CD8-positive, alpha-beta memory T cell (primary cell): ENCODE measurements at regions of chr15 and their contacts with region 1.

Region 1: GRCh38 chr15:60179786-60180391 is 175.8 kb downstream of the FOXB1 start:
- DNase-seq: peak in 3 of 5 donors; percentile 6 to 48 (median 28)
- H3K4me3 ChIP-seq: no peak overlapping the region
- H3K4me3 Mint-ChIP-seq: no peak overlapping the region
- H3K27ac ChIP-seq: no peak overlapping the region
- H3K27ac Mint-ChIP-seq: no peak overlapping the region
- H3K4me1 ChIP-seq: no peaks in the 10 kb centered on the region
- H3K4me1 Mint-ChIP-seq: no peaks in the 10 kb centered on the region
- H3K27me3 ChIP-seq: no peaks in the 10 kb centered on the region
- H3K27me3 Mint-ChIP-seq: peaks cover 13 to 44% of the 10 kb centered on the region in 2 donors

Region 2: GRCh38 chr15:59725172-59725486 is 454.8 kb before region 1 on chr15:
- CTCF ChIA-PET with region 1: interaction called, 13 read pairs
- POLR2A ChIA-PET with region 1: no interaction called
- DNase-seq: no peak
- H3K4me3 ChIP-seq: no peak overlapping the region
- H3K4me3 Mint-ChIP-seq: no peak overlapping the region
- H3K27ac ChIP-seq: no peak overlapping the region
- H3K27ac Mint-ChIP-seq: no peak overlapping the region
- H3K4me1 ChIP-seq: no peaks in the 10 kb centered on the region
- H3K4me1 Mint-ChIP-seq: peaks cover 0 to 3% (median 0%) of the 10 kb centered on the region in 3 donors
- H3K27me3 ChIP-seq: no peaks in the 10 kb centered on the region
- H3K27me3 Mint-ChIP-seq: peaks cover 2 to 25% of the 10 kb centered on the region in 2 donors

Region 3: DNA sequence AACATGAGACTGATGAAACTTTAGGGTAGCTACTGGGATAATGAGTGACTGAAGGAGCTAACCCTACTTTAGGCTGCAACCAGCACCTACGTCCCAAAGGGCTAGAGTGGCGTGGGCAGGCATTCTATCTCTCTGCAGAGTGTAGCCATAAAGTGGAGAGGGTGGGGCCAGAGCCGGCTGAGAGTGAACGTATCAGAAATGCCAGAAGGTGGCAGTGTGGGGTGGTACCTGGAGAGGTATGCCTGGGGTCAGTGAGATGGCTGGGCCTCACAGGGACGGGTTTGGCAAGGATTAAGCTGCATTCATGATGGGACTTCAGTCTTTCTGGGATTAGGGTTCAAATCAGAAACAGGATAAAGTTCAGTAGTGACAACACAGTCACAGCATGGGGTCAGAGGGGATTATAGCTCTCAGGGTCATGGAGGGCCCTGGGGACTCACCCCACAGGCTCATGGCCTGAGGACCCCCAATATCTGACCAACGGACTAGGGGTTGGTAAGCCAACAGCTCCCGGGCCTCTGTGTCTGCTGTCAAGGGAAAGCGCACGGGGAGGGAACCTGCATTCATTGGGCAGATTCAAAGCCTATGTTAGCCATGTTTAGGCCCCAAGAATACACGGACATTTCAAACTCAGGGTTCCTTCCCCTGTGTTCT is 262.3 kb before region 1 on chr15:
- CTCF ChIA-PET with region 1: interaction called, 11 read pairs
- POLR2A ChIA-PET with region 1: no interaction called
- DNase-seq: peak; percentile 25 to 66 (median 46)
- H3K4me3 ChIP-seq: no peak overlapping the region
- H3K4me3 Mint-ChIP-seq: no peak overlapping the region
- H3K27ac ChIP-seq: no peak overlapping the region
- H3K27ac Mint-ChIP-seq: no peak overlapping the region
- H3K4me1 ChIP-seq: peaks cover 11% of the 10 kb centered on the region
- H3K4me1 Mint-ChIP-seq: peaks cover 15 to 18% (median 17%) of the 10 kb centered on the region in 3 donors
- H3K27me3 ChIP-seq: no peaks in the 10 kb centered on the region
- H3K27me3 Mint-ChIP-seq: peaks cover 14 to 21% of the 10 kb centered on the region in 2 donors